ENCODE measurements at regions of chr6 and their contacts with region 1.

Region 1: GRCh38 chr6:12011276-12012076 is 636 bp upstream of the HIVEP1 start:
- DNase-seq: peak; percentile 99
- H3K4me3 Mint-ChIP-seq: peak overlapping the region; percentile 90
- H3K27ac Mint-ChIP-seq: peak overlapping the region; percentile 99
- H3K4me1 Mint-ChIP-seq: peaks cover 46% of the 10 kb centered on the region
- H3K27me3 Mint-ChIP-seq: no peaks in the 10 kb centered on the region

Region 2: GRCh38 chr6:10837995-10838793 is 1173.3 kb before region 1 on chr6 and contains the start of gene MAK:
- CTCF ChIA-PET with region 1: no interaction called
- POLR2A ChIA-PET with region 1: no interaction called
- intact Hi-C with region 1: loop called (anchors 2 kb)
- DNase-seq: peak; percentile 91
- H3K4me3 Mint-ChIP-seq: peak within 1 kb of the TSS; percentile 73
- H3K27ac Mint-ChIP-seq: peak within 1 kb of the TSS; percentile 98
- H3K4me1 Mint-ChIP-seq: peaks cover 31% of the 10 kb centered on the region
- H3K27me3 Mint-ChIP-seq: peaks cover 40% of the 10 kb centered on the region
- total RNA-seq, gene MAK: 0.87 to 1.1 TPM

Region 3: DNA sequence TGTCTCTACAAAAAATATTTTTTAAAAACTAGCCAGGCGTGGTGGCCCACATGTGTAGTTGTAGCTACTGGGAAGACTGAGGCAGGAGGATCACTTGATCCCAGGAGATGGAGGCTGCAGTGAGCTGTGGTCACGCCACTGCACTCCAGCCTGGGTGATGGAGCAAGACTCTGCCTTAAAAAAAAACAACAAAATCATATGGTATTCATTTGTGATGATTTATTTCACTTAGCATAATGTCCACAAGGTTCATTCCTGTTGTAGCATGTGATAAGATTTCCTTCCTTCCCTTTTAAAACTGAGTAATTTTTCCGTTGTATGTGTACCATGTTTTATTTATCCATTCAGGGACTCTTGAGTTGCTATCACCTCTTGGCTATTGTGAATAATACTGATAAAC is 447.7 kb before region 1 on chr6:
- CTCF ChIA-PET with region 1: no interaction called
- POLR2A ChIA-PET with region 1: no interaction called
- intact Hi-C with region 1: no loop called
- DNase-seq: no peak
- H3K4me3 Mint-ChIP-seq: no peak overlapping the region
- H3K27ac Mint-ChIP-seq: no peak overlapping the region
- H3K4me1 Mint-ChIP-seq: no peaks in the 10 kb centered on the region
- H3K27me3 Mint-ChIP-seq: no peaks in the 10 kb centered on the region

Region 4: DNA sequence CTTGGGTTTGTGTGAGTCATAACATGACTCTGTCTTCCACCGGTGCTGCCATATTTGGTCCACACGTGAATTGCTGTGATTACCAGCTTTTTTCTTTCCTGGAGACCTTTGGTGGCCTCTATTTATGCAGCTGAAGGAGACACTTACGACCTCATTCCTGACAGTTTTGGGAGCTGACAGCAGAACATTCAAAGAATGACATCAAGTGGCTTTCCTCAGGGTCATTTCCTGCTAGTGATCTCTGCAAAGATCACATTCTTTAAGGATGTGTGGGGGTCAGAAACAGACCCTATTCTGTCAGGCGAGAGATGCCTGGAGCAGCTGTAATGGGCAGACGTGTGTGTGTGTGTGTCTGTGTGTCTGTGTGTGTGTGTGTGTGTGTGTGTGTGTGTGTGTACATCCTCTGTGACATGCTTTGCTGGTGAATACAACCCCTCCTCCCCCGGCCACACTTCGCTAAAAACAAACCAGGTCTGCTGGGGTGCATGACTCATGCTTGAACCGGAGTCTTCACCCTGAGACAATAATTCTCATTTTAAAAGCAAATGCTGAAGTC is 358.4 kb before region 1 on chr6:
- CTCF ChIA-PET with region 1: no interaction called
- POLR2A ChIA-PET with region 1: no interaction called
- intact Hi-C with region 1: loop called (anchors 2 kb)
- DNase-seq: peak; percentile 71
- H3K4me3 Mint-ChIP-seq: no peak overlapping the region
- H3K27ac Mint-ChIP-seq: no peak overlapping the region
- H3K4me1 Mint-ChIP-seq: peaks cover 13% of the 10 kb centered on the region
- H3K27me3 Mint-ChIP-seq: peaks cover 9% of the 10 kb centered on the region

Region 5: DNA sequence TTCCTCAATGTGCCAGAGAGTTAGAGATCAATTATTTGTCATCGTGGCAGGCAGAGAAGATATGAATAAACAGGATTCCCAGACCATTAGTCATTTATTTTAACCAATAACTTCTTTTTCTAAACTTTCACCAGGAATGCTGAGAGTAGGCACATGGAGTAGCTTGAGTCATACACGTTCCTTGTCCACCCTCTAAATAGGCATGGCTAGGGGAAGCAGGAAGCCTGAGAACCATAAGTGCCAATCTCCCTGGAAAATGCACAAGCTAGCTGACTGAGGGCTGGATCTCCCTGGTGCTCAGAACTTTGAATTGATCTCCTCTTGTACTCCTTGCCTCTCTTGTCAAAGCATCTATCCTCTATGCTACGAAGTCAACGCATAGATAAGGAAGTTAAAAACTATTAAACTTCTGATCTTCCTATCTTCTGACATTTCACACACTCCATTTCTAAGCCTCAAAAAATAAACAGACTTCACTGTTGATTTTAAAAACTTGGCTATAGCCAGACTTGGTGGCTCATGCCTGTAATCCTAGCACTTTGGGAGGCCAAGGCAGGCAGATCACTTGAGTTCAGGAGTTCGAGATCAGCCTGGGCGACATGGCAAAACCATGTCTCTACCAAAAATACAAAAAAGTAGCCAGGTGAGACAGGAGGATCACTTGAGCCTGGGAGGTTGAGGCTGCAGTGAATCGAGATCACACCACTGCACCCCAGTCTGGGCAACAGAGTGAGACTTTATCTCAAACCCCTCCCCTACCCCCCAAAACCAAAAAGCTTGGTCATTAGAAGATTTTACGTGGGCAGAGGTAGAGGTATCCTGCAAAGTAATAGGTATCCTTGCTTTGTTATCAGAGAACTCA is 244.7 kb before region 1 on chr6:
- CTCF ChIA-PET with region 1: no interaction called
- POLR2A ChIA-PET with region 1: no interaction called
- intact Hi-C with region 1: loop called (anchors 5 kb)
- DNase-seq: no peak
- H3K4me3 Mint-ChIP-seq: no peak overlapping the region
- H3K27ac Mint-ChIP-seq: no peak overlapping the region
- H3K4me1 Mint-ChIP-seq: peaks cover 39% of the 10 kb centered on the region
- H3K27me3 Mint-ChIP-seq: peaks cover 8% of the 10 kb centered on the region

Region 6: GRCh38 chr6:11824986-11825385 is 186.5 kb before region 1 on chr6:
- CTCF ChIA-PET with region 1: no interaction called
- POLR2A ChIA-PET with region 1: no interaction called
- intact Hi-C with region 1: loop called (anchors 5 kb)
- DNase-seq: peak; percentile 51
- H3K4me3 Mint-ChIP-seq: no peak overlapping the region
- H3K27ac Mint-ChIP-seq: peak overlapping the region; percentile 61
- H3K4me1 Mint-ChIP-seq: peaks cover 11% of the 10 kb centered on the region
- H3K27me3 Mint-ChIP-seq: peaks cover 2% of the 10 kb centered on the region

Region 7: DNA sequence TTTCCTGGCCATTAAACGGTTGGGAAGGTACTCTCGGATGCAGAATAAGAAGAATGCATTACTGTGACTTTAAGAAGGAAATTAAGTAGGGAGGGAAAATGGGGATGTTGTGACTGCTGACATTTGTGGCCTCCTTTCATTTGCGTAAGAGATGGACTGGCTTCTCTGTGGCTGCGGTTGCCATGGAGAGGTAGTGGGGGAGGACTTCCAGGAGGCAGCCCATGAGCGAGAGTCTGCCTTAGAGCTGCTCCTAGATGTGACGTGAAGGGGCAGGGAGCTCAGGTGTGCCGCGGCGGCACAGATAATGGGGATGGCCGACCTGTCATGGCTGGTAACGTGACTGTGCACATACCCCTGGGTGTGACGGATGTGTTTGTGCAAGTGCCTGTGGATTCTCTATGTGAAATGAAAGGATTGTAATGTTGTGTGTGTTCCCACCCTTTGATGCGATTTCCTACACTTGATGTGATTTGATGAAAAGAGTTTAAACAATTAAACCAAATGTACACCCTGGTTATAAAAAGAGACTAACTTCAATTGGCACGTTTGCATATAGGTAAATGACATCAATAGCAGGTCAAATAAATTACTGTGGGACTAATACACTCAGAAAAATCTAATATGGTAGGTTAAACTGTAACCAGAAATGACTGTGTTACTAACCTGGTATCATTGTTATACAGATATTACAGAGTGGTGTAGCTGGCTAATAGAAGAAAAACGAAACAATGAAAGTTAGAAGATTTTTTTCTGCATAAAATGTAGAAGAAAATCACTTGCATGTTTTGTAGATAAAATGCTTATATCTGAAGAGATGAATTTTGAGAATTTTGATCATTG is 49.5 kb after region 1 on chr6:
- CTCF ChIA-PET with region 1: interaction called, 4 read pairs
- POLR2A ChIA-PET with region 1: interaction called, 3 read pairs
- intact Hi-C with region 1: loop called (anchors 1 kb)
- DNase-seq: peak; percentile 87
- H3K4me3 Mint-ChIP-seq: peak overlapping the region; percentile 76
- H3K27ac Mint-ChIP-seq: peak overlapping the region; percentile 84
- H3K4me1 Mint-ChIP-seq: peaks cover 65% of the 10 kb centered on the region
- H3K27me3 Mint-ChIP-seq: no peaks in the 10 kb centered on the region

Region 8: DNA sequence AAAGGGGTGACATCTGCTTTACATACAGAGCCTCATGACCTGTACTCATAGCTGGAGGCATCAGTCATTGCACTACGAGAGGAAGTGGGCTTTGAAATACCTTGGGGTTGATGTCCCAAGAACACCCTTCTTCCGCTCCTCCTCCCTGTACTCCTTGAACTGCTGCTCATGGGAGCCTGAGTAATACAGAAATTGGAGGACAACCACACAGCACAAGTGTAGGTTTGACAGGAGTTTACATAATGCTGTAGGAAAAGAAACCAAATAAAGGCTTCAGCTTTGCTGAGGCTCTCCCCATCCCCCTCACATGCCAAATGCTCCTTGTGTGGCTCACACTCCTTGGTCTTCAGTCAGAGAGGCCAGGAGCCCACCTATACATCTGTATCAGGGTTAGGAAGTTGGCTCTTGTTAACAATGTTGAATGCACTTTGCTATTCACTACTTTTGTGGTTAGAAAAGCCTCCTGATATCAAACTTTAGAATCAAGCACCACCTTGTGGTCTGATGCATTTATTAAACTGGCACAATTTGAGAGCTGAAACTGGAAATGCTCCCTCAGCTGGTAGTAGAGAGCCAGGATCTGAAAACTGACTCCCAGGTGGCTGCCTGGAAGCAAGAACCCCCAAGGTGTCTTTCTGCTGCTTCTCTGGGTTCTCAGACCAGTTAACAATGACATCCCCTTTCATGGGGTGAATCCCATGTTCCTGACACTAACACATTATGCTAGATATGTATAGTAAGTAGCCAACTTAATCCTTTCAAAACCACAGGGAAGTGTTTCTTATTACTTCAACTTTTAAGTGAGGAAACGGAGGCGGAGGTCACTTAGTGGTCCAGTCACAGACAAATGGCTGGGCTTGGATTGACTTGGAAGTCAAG is 222.5 kb after region 1 on chr6:
- CTCF ChIA-PET with region 1: interaction called, 4 read pairs
- POLR2A ChIA-PET with region 1: interaction called, 3 read pairs
- intact Hi-C with region 1: loop called (anchors 1 kb)
- DNase-seq: peak; percentile 70
- H3K4me3 Mint-ChIP-seq: no peak overlapping the region
- H3K27ac Mint-ChIP-seq: no peak overlapping the region
- H3K4me1 Mint-ChIP-seq: peaks cover 35% of the 10 kb centered on the region
- H3K27me3 Mint-ChIP-seq: no peaks in the 10 kb centered on the region

Measured in activated CD4-positive, alpha-beta memory T cell treated with anti-CD3 and anti-CD28 coated beads for 36 hours (primary cell).